A673 (cell line): ENCODE measurements at regions of chr5 and their contacts with region 1.

Region 1: DNA sequence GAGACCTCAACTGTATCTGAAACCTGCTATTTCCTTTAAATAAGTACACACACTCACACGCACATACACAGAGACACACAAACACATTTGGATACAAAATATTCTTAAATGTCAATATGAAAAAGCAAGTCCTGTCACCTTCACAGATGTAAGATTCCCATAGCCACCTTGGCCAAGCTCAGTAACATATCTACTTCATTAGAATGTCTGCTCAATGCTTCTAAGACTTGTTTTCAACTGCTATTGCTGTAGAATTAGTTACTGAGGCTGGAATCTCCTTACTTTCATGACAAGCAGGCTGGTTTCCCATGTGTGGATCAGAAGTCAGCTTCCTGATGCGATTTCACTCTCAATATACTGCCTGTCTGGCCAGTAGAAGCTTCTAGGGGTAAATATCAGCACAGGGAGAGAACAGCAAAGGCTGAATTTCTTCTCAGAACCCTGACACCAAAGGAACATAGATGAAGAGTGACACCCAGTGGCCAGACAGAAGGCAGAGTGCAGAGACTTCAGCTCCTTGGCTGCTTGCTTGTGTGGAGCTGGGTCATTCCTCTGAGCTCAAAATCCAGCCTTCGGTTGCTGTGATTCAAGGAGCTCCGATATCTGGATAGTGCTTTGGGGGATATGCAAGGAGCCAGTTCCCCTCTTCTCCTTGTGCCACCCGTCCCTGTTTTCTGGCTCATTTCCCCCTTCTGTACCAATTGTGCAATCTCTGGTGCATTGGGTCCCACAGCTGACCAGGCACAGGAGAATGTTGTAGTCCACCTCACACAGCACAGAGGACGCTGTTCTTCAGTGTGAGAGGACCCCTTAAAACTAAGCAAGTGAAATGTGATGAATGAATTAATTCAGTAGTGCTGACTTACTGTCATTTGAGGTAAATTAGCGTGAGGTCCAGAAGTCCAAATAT is 26.6 kb upstream of the ABLIM3 start:
- DNase-seq: peak; percentile 77
- H3K4me3 ChIP-seq: no peak overlapping the region
- H3K27ac ChIP-seq: no peak overlapping the region
- H3K4me1 ChIP-seq: no peaks in the 10 kb centered on the region
- H3K27me3 ChIP-seq: peaks cover 34% of the 10 kb centered on the region
- CTCF ChIP-seq: peak; percentile 68

Region 2: DNA sequence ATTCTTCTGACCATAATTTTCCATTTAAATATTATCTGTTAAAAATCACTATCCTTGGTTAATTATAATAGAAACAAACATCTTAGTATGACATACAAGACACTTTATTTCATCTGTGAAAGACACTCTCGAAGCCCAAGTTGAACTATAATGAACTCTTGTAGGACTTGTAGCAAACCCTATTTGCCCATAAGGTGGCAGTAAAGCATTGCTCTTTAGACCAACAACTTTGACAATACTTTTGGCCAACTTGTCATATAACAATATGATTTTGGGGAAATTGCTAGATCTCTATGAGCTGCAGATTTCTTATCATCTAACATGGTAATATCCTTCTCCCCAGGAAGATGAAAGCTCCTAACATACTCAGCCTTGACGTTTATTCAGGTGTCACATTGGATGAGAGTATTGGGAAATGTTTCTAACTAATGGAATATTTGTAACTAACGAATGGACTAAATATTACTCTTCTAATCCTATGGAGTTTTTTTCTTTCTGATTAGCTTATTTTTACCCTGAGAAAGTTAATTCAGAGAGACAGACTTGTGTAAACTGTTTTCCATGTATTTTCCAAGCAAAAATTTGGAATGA is 935.3 kb before region 1 on chr5:
- CTCF ChIA-PET with region 1: no interaction called
- POLR2A ChIA-PET with region 1: no interaction called
- intact Hi-C with region 1: loop called (anchors 10 kb)
- DNase-seq: peak; percentile 58
- H3K4me3 ChIP-seq: no peak overlapping the region
- H3K27ac ChIP-seq: no peak overlapping the region
- H3K4me1 ChIP-seq: no peaks in the 10 kb centered on the region
- H3K27me3 ChIP-seq: peaks cover 32% of the 10 kb centered on the region
- CTCF ChIP-seq: peak; percentile 69

Region 3: DNA sequence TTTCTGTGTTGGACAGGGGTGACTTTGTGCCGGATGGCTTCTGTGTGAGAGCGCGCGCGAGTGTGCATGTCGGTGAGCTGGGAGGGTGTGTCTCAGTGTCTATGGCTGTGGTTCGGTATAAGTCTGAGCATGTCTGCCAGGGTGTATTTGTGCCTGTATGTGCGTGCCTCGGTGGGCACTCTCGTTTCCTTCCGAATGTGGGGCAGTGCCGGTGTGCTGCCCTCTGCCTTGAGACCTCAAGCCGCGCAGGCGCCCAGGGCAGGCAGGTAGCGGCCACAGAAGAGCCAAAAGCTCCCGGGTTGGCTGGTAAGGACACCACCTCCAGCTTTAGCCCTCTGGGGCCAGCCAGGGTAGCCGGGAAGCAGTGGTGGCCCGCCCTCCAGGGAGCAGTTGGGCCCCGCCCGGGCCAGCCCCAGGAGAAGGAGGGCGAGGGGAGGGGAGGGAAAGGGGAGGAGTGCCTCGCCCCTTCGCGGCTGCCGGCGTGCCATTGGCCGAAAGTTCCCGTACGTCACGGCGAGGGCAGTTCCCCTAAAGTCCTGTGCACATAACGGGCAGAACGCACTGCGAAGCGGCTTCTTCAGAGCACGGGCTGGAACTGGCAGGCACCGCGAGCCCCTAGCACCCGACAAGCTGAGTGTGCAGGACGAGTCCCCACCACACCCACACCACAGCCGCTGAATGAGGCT is 288.5 kb before region 1 on chr5 and contains the start of gene ADRB2:
- CTCF ChIA-PET with region 1: no interaction called
- POLR2A ChIA-PET with region 1: interaction called, 3 read pairs
- intact Hi-C with region 1: loop called (anchors 10 kb)
- DNase-seq: peak; percentile 87
- H3K4me3 ChIP-seq: peak within 1 kb of the TSS; percentile 41
- H3K27ac ChIP-seq: no peak within 1 kb of the TSS
- H3K4me1 ChIP-seq: peaks cover 4% of the 10 kb centered on the region
- H3K27me3 ChIP-seq: peaks cover 57% of the 10 kb centered on the region
- CTCF ChIP-seq: no peak
- total RNA-seq, gene ADRB2: not detected in 2 replicates

Region 4: DNA sequence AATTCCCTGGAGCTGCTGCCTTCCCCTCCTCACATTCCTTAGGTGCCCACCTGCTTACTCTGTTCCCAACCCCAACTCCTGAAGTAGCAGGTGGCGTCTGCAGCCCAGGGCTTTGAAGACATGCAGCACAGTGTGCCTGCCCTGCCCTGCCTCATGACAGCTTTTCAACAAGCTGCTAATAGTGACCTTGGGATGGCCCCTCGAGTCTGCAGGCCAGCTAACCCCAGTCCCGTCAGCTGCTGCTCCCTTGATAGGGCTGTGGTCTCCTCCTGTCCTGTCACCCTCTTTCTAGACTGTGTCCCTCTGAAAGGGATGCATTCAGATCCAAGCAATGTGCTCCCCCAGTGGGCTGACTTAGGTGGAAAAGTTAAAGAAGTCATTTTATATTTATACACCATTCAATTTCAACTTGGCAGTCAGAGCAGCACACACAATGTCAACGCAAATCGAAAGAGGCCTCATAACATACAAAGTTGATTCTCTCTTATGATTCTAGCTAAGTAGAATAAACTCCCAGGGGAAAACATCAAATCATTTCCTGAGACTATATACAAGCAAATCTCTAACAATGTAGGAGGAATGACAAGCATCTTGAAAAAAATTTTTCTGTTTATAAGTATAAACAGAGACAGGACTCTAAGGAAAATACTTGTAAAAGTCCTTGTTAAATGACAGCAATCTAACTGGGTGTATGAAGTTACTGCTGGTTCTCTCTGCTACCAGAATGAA is 250.4 kb before region 1 on chr5:
- CTCF ChIA-PET with region 1: no interaction called
- POLR2A ChIA-PET with region 1: no interaction called
- intact Hi-C with region 1: no loop called
- DNase-seq: no peak
- H3K4me3 ChIP-seq: no peak overlapping the region
- H3K27ac ChIP-seq: no peak overlapping the region
- H3K4me1 ChIP-seq: no peaks in the 10 kb centered on the region
- H3K27me3 ChIP-seq: peaks cover 3% of the 10 kb centered on the region
- CTCF ChIP-seq: no peak

Region 5: DNA sequence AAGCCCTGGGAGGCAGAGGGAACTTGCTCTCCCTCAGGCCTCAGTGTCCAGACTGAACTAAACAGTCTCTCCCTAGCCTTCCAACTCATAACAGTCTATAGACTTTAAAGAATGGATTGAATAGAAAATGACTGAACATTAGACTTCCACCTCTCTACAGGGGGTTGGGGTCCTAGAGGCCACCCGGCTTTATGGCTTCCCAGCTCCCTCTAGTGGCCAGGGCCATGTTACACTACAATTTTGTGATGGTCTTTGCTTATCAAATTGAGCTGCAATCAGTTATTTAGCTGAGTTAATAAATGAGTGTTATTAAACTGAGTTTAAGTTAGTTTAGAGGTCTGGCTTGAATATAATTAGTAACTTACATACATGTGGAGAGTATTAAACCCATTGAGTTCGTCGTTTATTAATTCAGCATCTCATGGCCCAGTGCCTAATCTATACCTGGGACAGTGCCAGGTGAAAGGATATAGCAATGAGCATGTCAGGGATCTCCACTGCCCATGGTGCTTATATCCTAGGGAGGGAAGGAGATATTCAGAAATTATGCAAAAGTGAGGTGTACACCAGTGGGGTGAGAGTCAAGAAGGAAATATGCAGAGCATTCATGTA is 157.0 kb before region 1 on chr5:
- CTCF ChIA-PET with region 1: interaction called, 3 read pairs
- POLR2A ChIA-PET with region 1: no interaction called
- intact Hi-C with region 1: loop called (anchors 10 kb)
- DNase-seq: peak; percentile 68
- H3K4me3 ChIP-seq: no peak overlapping the region
- H3K27ac ChIP-seq: no peak overlapping the region
- H3K4me1 ChIP-seq: no peaks in the 10 kb centered on the region
- H3K27me3 ChIP-seq: no peaks in the 10 kb centered on the region
- CTCF ChIP-seq: peak; percentile 84

Region 6: GRCh38 chr5:149035372-149035790 is 79.3 kb before region 1 on chr5:
- CTCF ChIA-PET with region 1: interaction called, 4 read pairs
- POLR2A ChIA-PET with region 1: no interaction called
- intact Hi-C with region 1: loop called (anchors 5 kb)
- DNase-seq: peak; percentile 80
- H3K4me3 ChIP-seq: no peak overlapping the region
- H3K27ac ChIP-seq: no peak overlapping the region
- H3K4me1 ChIP-seq: no peaks in the 10 kb centered on the region
- H3K27me3 ChIP-seq: no peaks in the 10 kb centered on the region
- CTCF ChIP-seq: peak; percentile 85

Region 7: GRCh38 chr5:149094981-149095380 is 19.7 kb before region 1 on chr5:
- CTCF ChIA-PET with region 1: no interaction called
- POLR2A ChIA-PET with region 1: no interaction called
- intact Hi-C with region 1: no loop called
- DNase-seq: no peak
- H3K4me3 ChIP-seq: no peak overlapping the region
- H3K27ac ChIP-seq: no peak overlapping the region
- H3K4me1 ChIP-seq: no peaks in the 10 kb centered on the region
- H3K27me3 ChIP-seq: no peaks in the 10 kb centered on the region
- CTCF ChIP-seq: no peak